ENCODE measurements at regions of chr7 and their contacts with region 1.

Region 1: DNA sequence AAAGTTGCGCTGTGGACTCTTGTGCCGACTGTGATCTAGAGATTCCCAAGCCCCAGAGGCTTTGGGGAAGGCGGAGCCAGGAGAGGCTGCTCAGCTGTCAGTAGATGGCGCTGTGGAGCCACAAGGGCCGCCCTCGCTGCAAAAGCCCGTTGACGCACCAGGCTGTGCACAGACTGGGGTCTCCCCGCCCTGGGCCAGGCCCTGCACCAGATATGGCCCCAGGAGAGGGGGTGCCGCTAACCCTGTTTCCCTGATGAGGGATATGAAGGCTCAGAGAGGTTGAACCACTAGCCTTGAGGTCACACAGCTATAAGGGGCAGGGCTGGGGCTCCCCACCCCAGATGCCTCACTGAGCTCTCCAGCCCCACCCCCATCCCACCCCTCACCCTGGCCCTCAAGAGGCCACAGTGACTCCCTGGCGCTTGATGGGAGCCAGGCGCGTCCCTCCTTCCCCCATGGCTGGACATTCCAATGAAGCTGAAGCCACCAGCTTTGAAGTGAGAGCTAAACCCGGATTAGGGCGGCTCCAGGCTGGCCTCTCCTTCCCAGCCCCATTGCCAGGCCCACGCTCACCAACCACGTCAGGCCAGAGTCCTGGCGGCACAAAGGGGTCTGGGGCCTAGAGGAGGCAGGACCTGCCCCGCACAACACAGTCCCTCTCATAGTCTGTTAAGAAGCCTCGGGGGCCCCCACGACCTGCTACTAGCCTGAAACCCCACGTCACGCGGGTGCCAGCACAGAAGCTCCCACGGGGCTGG is 26.4 kb downstream of the MYL10 start:
- DNase-seq: peak; percentile 81
- H3K4me3 Mint-ChIP-seq: no peak overlapping the region
- H3K27ac Mint-ChIP-seq: no peak overlapping the region
- H3K4me1 Mint-ChIP-seq: no peaks in the 10 kb centered on the region
- H3K27me3 Mint-ChIP-seq: peaks cover 6% of the 10 kb centered on the region

Region 2: DNA sequence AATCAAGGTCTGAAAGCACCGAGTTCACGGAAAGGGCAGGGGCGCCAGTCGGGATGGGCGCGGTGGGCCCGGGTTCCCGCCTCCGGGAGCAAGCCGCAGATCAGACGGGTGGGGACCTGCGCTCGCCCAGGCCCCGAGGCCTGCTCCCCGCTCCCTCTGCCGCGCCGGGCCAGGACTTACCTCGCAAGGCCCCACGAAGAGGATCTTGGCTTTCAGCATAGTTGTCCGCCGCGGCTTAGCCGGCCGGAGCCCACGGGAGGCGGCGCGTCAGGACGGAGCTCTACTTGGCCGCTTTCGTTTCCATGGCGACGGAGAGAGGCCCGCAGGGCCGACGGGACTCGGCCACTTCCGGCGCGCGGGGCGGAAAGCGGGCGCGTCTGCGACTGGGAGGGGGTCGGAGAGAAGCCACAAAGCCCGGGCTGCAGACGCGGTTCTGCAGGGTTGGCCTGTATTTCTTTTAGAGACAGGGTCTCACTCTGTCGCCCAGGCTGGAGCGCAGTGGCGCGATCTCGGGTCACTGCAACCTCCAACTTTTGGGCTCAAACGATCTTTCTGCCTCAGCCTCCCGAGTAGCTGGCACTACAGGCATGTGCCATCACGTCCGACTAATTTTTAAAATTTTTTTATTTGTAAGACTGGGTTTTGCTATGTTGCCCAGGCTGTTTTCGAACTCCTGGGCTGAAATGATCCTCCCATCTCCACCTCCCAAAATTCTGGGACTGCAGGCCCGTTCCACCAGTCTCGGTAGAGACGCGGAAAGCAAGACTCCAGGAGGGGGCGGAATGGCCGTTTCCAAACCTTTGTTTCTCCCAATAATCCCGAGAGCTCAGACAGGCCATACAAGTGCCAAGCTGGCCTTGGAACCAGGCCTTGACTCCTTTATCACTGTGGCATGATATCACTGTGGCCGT is 280.9 kb before region 1 on chr7 and contains the start of gene IFT22:
- CTCF ChIA-PET with region 1: no interaction called
- DNase-seq: peak; percentile 93
- H3K4me3 Mint-ChIP-seq: peak within 1 kb of the TSS; percentile 87
- H3K27ac Mint-ChIP-seq: peak within 1 kb of the TSS; percentile 88
- H3K4me1 Mint-ChIP-seq: peaks cover 20% of the 10 kb centered on the region
- H3K27me3 Mint-ChIP-seq: peaks cover 9% of the 10 kb centered on the region

Region 3: GRCh38 chr7:101507791-101508252 is 94.8 kb before region 1 on chr7:
- CTCF ChIA-PET with region 1: no interaction called
- DNase-seq: peak; percentile 66
- H3K4me3 Mint-ChIP-seq: peak overlapping the region; percentile 50
- H3K27ac Mint-ChIP-seq: peak overlapping the region; percentile 9
- H3K4me1 Mint-ChIP-seq: peaks cover 22% of the 10 kb centered on the region
- H3K27me3 Mint-ChIP-seq: peaks cover 42% of the 10 kb centered on the region

Region 4: GRCh38 chr7:102236592-102237287 is 634.1 kb after region 1 on chr7:
- CTCF ChIA-PET with region 1: interaction called, 15 read pairs
- DNase-seq: peak; percentile 64
- H3K4me3 Mint-ChIP-seq: no peak overlapping the region
- H3K27ac Mint-ChIP-seq: no peak overlapping the region
- H3K4me1 Mint-ChIP-seq: no peaks in the 10 kb centered on the region
- H3K27me3 Mint-ChIP-seq: no peaks in the 10 kb centered on the region